Caco-2 (cell line): ENCODE measurements at regions of chrX and their contacts with region 1.

Region 1: DNA sequence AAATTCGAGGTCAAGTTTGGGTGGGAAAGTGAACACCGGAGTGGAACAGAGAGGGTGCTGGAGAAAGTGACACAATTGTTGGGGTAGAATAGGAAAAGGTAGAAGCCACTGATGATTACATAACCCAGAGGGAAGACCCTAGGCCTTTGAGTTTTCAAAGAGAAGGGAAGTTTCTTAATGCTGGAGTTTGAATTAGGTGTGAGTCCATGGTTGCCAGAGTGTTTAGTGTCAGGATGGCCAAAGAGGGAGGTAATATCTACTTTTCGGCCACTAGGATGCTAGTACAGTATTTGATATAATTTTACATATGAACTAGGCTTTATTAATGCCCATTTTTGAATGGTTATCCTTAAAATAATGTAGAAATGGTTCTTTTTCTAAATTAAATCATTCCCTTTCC is 5.4 kb downstream of the BCORL1 start:
- DNase-seq: no peak
- H3K4me3 ChIP-seq: no peak overlapping the region
- H3K4me3 Mint-ChIP-seq: no peak overlapping the region
- H3K27ac Mint-ChIP-seq: no peak overlapping the region
- H3K4me1 ChIP-seq: no peaks in the 10 kb centered on the region
- H3K4me1 Mint-ChIP-seq: no peaks in the 10 kb centered on the region
- H3K27me3 ChIP-seq: no peaks in the 10 kb centered on the region
- H3K27me3 Mint-ChIP-seq: no peaks in the 10 kb centered on the region
- CTCF ChIP-seq: no peak

Region 2: GRCh38 chrX:130001893-130002292 is 14.0 kb after region 1 on chrX:
- CTCF ChIA-PET with region 1: no interaction called
- POLR2A ChIA-PET with region 1: no interaction called
- intact Hi-C with region 1: loop called (anchors 2 kb)
- DNase-seq: no peak
- H3K4me3 ChIP-seq: no peak overlapping the region
- H3K4me3 Mint-ChIP-seq: no peak overlapping the region
- H3K27ac Mint-ChIP-seq: no peak overlapping the region
- H3K4me1 ChIP-seq: no peaks in the 10 kb centered on the region
- H3K4me1 Mint-ChIP-seq: no peaks in the 10 kb centered on the region
- H3K27me3 ChIP-seq: no peaks in the 10 kb centered on the region
- H3K27me3 Mint-ChIP-seq: no peaks in the 10 kb centered on the region
- CTCF ChIP-seq: no peak